ENCODE measurements at regions of chr11 and their contacts with region 1.

Region 1: DNA sequence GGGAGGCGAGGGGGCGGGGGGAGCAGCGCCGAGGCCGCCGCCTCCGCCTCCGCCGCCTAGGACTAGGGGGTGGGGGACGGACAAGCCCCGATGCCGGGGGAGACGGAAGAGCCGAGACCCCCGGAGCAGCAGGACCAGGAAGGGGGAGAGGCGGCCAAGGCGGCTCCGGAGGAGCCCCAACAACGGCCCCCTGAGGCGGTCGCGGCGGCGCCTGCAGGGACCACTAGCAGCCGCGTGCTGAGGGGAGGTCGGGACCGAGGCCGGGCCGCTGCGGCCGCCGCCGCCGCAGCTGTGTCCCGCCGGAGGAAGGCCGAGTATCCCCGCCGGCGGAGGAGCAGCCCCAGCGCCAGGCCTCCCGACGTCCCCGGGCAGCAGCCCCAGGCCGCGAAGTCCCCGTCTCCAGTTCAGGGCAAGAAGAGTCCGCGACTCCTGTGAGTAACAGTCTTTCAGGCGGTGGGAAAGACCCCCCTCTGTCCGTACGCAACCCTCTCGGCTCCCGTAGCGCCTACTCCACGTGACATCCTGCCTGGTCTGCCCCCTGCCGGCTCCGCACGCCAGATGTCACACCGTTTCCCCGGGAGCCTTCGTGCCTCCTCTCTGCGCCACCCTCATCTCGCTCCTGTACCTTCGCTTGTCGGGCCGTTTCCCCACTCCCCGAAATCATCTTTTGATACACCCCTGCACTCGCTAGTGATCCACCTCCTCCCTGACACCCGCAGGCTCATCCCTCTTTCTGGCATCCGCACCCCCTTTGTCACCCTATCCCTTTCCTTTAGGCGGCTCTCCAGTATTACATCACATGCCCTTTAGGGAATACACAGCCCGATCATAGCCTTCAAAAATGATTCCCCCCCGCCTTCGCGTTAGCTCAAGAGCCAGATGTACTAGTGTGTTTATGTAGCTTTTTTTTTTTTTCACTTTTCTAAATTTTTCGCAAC is 598 bp downstream of the ZFP91 start:
- DNase-seq: peak; percentile 91 to 94 (median 94)
- H3K4me3 ChIP-seq: peak overlapping the region; percentile 95
- H3K27ac ChIP-seq: peak overlapping the region; percentile 99 to 100
- H3K4me1 ChIP-seq: peaks cover 7% of the 10 kb centered on the region
- H3K27me3 ChIP-seq: no peaks in the 10 kb centered on the region
- CTCF ChIP-seq: peak; percentile 65 to 97 (median 95)
- EP300 ChIP-seq: peak; percentile 58
- POLR2A ChIP-seq: no peak

Region 2: GRCh38 chr11:57426929-57427726 is 1152.3 kb before region 1 on chr11 and contains the start of gene SLC43A3:
- intact Hi-C with region 1: loop called in 1 of 4 experiments (anchors 5 kb)
- DNase-seq: peak; percentile 83 to 86 (median 85)
- H3K4me3 ChIP-seq: peak within 1 kb of the TSS; percentile 57
- H3K27ac ChIP-seq: peak within 1 kb of the TSS; percentile 93 to 98
- H3K4me1 ChIP-seq: peaks cover 23% of the 10 kb centered on the region
- H3K27me3 ChIP-seq: no peaks in the 10 kb centered on the region
- CTCF ChIP-seq: peak in 1 of 3 donors; percentile 16
- EP300 ChIP-seq: no peak
- POLR2A ChIP-seq: peak; percentile 71
- total RNA-seq, gene SLC43A3: 17.0 to 47.2 (median 36.3) TPM

Region 3: GRCh38 chr11:58199271-58199670 is 380.2 kb before region 1 on chr11:
- intact Hi-C with region 1: no loop called
- DNase-seq: no peak
- H3K4me3 ChIP-seq: no peak overlapping the region
- H3K27ac ChIP-seq: no peak overlapping the region
- H3K4me1 ChIP-seq: no peaks in the 10 kb centered on the region
- H3K27me3 ChIP-seq: no peaks in the 10 kb centered on the region
- CTCF ChIP-seq: no peak
- EP300 ChIP-seq: no peak
- POLR2A ChIP-seq: no peak

Region 4: GRCh38 chr11:58471892-58472291 is 107.6 kb before region 1 on chr11:
- intact Hi-C with region 1: no loop called
- DNase-seq: no peak
- H3K4me3 ChIP-seq: no peak overlapping the region
- H3K27ac ChIP-seq: no peak overlapping the region
- H3K4me1 ChIP-seq: no peaks in the 10 kb centered on the region
- H3K27me3 ChIP-seq: no peaks in the 10 kb centered on the region
- CTCF ChIP-seq: no peak
- EP300 ChIP-seq: no peak
- POLR2A ChIP-seq: no peak

Region 5: DNA sequence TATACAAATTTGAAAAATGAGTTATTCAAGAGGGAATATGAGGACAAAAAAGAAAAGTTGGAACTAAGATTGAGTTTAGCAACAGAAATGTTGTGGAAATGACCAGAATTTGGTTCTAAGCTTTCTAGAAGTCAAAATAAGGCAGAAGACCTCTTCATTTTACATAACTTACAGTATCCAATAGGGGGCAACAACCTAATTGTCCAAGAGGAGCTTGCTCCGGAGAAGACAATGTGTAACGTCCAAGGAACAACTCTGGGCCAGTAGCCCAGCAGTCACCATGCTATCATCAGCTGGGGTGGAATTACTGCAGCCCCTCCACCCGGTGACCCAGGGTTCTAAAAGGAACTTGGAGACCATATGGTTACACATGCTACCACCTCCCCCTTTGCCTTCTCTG is 57.1 kb after region 1 on chr11:
- intact Hi-C with region 1: loop called in 1 of 4 experiments (anchors 5 kb)
- DNase-seq: no peak
- H3K4me3 ChIP-seq: no peak overlapping the region
- H3K27ac ChIP-seq: no peak overlapping the region
- H3K4me1 ChIP-seq: peaks cover 17% of the 10 kb centered on the region
- H3K27me3 ChIP-seq: no peaks in the 10 kb centered on the region
- CTCF ChIP-seq: no peak
- EP300 ChIP-seq: no peak
- POLR2A ChIP-seq: no peak